PC-9 (cell line): ENCODE measurements at regions of chr16 and their contacts with region 1.

Region 1: GRCh38 chr16:67672739-67673662 is 6.4 kb downstream of the C16orf86 start:
- DNase-seq: peak; percentile 39 to 67
- H3K4me3 ChIP-seq: no peak overlapping the region
- H3K27ac ChIP-seq: no peak overlapping the region
- H3K4me1 ChIP-seq: peaks cover 25% of the 10 kb centered on the region
- H3K27me3 ChIP-seq: no peaks in the 10 kb centered on the region
- CTCF ChIP-seq: peak; percentile 84

Region 2: DNA sequence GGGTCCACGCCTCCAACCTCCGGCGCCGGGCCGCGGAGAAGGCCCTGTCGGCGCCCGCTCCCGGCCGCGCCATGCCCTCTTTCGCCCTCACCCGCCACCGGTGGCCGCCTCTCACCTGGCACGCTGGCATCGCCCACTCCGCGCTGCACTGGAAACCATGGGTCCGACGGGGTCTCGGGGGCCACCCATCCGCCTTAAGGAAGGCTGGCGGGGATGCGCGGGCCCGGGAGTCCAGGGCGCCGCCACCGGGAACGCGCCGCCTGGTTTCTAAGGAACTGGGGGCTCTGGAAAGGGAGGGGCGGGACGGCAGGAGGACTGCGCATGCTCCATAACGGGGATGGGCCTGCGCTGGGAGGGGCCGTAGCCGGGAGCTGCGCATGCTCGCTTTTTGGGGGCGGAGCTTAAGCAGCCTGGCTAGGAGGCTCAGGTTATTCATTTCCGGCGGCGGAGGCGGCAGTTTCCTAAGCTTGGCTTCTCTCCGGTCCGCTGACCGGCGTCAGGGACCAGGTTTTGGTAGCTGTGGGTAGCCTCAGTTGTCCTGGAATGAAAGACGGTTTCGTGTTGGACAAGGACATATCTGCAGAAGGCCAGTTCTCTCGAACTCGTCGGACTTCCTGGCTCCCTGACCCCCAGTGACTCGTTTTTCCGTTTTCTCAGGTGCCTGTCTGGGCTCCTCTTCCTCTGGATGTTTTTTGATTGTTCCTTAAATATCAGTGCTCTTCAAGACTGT is 46.2 kb after region 1 on chr16 and contains the start of gene GFOD2:
- CTCF ChIA-PET with region 1: no interaction called
- POLR2A ChIA-PET with region 1: interaction called, 4 read pairs
- intact Hi-C with region 1: loop called (anchors 5 kb)
- DNase-seq: peak; percentile 77 to 96
- H3K4me3 ChIP-seq: peak within 1 kb of the TSS; percentile 71
- H3K27ac ChIP-seq: 0 out of 2 replicates have a peak within 1 kb of the TSS, but pooled peaks have one; percentile 4
- H3K4me1 ChIP-seq: peaks cover 24% of the 10 kb centered on the region
- H3K27me3 ChIP-seq: no peaks in the 10 kb centered on the region
- CTCF ChIP-seq: no peak
- total RNA-seq, gene GFOD2: 17.6 and 20.4 TPM in 2 replicates

Region 3: GRCh38 chr16:67928561-67929364 is 255.8 kb after region 1 on chr16:
- CTCF ChIA-PET with region 1: no interaction called
- POLR2A ChIA-PET with region 1: no interaction called
- intact Hi-C with region 1: loop called (anchors 1 kb)
- DNase-seq: peak in 1 of 2 experiments; percentile 64
- H3K4me3 ChIP-seq: no peak overlapping the region
- H3K27ac ChIP-seq: no peak overlapping the region
- H3K4me1 ChIP-seq: no peaks in the 10 kb centered on the region
- H3K27me3 ChIP-seq: no peaks in the 10 kb centered on the region
- CTCF ChIP-seq: peak; percentile 90